Dorsolateral prefrontal cortex (tissue), 120 donors: ENCODE measurements at regions of chr7 and their contacts with region 1.

Region 1: GRCh38 chr7:92717993-92718716 is 118.2 kb downstream of the CDK6 start:
- DNase-seq: peak in 9 of 10 donors; percentile 45 to 75 (median 65)
- H3K4me3 ChIP-seq: peak overlapping the region; percentile 40 to 80 (median 65)
- H3K27ac ChIP-seq: peak overlapping the region; percentile 88 to 99 (median 97)
- H3K27me3 ChIP-seq: no peaks in the 10 kb centered on the region
- CTCF ChIP-seq: peak in 11 of 56 donors; percentile 6 to 33 (median 14)

Region 2: GRCh38 chr7:92754919-92755581 is 36.9 kb after region 1 on chr7:
- intact Hi-C with region 1: loop called (anchors 5 to 10 kb)
- DNase-seq: peak; percentile 46 to 85 (median 68)
- H3K4me3 ChIP-seq: peak overlapping the region in 19 of 59 donors; percentile 2 to 35 (median 14)
- H3K27ac ChIP-seq: peak overlapping the region in 54 of 59 donors; percentile 8 to 83 (median 66)
- H3K27me3 ChIP-seq: no peaks in the 10 kb centered on the region
- CTCF ChIP-seq: no peak

Region 3: GRCh38 chr7:92768501-92769393 is 50.6 kb after region 1 on chr7:
- intact Hi-C with region 1: loop called in 1 of 2 experiments (anchors 10 kb)
- DNase-seq: peak in 1 of 10 donors; percentile 29
- H3K4me3 ChIP-seq: peak overlapping the region in 26 of 59 donors; percentile 7 to 44 (median 22)
- H3K27ac ChIP-seq: peak overlapping the region in 58 of 59 donors; percentile 14 to 86 (median 74)
- H3K27me3 ChIP-seq: no peaks in the 10 kb centered on the region
- CTCF ChIP-seq: no peak